H1 (cell line): ENCODE measurements at regions of chr1 and their contacts with region 1.

Region 1: DNA sequence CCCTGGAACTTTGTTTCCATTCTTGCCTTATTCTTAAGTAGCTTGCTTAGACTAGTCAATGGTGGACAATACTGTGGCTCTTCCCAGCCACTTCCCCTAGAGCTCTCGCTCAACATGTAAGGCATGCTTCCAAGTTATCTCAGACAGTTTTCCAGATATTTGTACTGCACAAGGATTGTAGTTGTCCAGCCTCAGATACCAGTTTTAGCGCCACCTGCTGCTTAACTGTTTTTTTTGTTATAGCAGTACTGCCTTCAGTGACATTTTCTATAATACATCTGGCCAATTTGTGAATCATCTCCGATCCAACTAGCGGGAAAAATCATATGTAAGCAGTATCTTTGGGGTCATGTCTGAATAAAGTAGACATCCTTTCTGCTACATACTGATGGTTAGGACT is 346.7 kb upstream of the ADGRL4 start:
- DNase-seq: peak in 1 of 2 experiments; percentile 46
- H3K4me3 ChIP-seq: no peak overlapping the region
- H3K27ac ChIP-seq: no peak overlapping the region
- H3K4me1 ChIP-seq: no peaks in the 10 kb centered on the region
- H3K27me3 ChIP-seq: no peaks in the 10 kb centered on the region; a peak in 1 of 7 replicates
- CTCF ChIP-seq: peak in 2 of 3 experiments; percentile 36 to 48; a peak in 2 of 4 replicates
- EP300 ChIP-seq: no peak
- POLR2A ChIP-seq: no peak
- RAD21 ChIP-seq: peak; percentile 43 to 44

Region 2: GRCh38 chr1:79364896-79365295 is 11.7 kb after region 1 on chr1:
- CTCF ChIA-PET with region 1: interaction called, 38 read pairs
- POLR2A ChIA-PET with region 1: no interaction called
- DNase-seq: no peak
- H3K4me3 ChIP-seq: no peak overlapping the region
- H3K27ac ChIP-seq: no peak overlapping the region
- H3K4me1 ChIP-seq: peaks cover 0 to 5% (median 0%) of the 10 kb centered on the region in 4 experiments; a peak in 1 of 7 replicates
- H3K27me3 ChIP-seq: no peaks in the 10 kb centered on the region
- CTCF ChIP-seq: no peak
- EP300 ChIP-seq: no peak
- POLR2A ChIP-seq: no peak
- RAD21 ChIP-seq: no peak

Region 3: DNA sequence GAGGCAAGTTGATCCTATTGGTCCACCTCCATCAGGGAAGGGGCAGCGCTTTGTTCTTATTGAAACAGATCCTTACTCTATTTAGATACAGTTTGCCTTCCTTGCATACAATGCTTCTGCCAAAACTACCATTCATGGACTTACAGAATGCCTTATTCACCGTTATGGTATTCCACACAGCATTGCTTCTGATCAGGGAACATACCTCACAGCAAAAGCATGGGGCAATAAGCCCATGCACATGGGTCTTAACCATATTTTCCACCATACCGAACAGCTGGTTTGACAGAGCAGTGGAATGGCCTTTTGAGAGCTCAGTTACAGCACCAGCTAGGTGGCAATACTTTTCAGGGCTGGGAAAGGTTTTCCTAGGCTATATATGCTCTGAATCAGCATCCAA is 198.1 kb after region 1 on chr1:
- CTCF ChIA-PET with region 1: no interaction called
- POLR2A ChIA-PET with region 1: no interaction called
- DNase-seq: no peak
- H3K4me3 ChIP-seq: no peak overlapping the region
- H3K27ac ChIP-seq: no peak overlapping the region
- H3K4me1 ChIP-seq: no peaks in the 10 kb centered on the region
- H3K27me3 ChIP-seq: no peaks in the 10 kb centered on the region
- CTCF ChIP-seq: no peak
- EP300 ChIP-seq: no peak
- POLR2A ChIP-seq: no peak
- RAD21 ChIP-seq: no peak